Activated CD4-positive, alpha-beta T cell treated with anti-CD3 and anti-CD28 coated beads for 36 hours (primary cell): ENCODE measurements at regions of chr19 and their contacts with region 1.

Region 1: GRCh38 chr19:54463531-54464043 is at the start of gene LENG9:
- DNase-seq: peak; percentile 100
- ATAC-seq: peak; percentile 69
- H3K4me3 Mint-ChIP-seq: peak within 1 kb of the TSS; percentile 80
- H3K27ac Mint-ChIP-seq: peak within 1 kb of the TSS; percentile 91
- H3K4me1 Mint-ChIP-seq: peaks cover 26% of the 10 kb centered on the region
- H3K27me3 Mint-ChIP-seq: peaks cover 6% of the 10 kb centered on the region
- total RNA-seq, gene LENG9: 5.0 to 5.1 TPM

Region 2: GRCh38 chr19:53867225-53868090 is 596.1 kb before region 1 on chr19 and contains the start of gene MYADM:
- CTCF ChIA-PET with region 1: no interaction called
- POLR2A ChIA-PET with region 1: no interaction called
- intact Hi-C with region 1: loop called (anchors 1 to 5 kb)
- DNase-seq: peak; percentile 99
- ATAC-seq: peak; percentile 71
- H3K4me3 Mint-ChIP-seq: peak within 1 kb of the TSS; percentile 91
- H3K27ac Mint-ChIP-seq: peak within 1 kb of the TSS; percentile 88
- H3K4me1 Mint-ChIP-seq: peaks cover 32% of the 10 kb centered on the region
- H3K27me3 Mint-ChIP-seq: no peaks in the 10 kb centered on the region
- total RNA-seq, gene MYADM: 46.4 to 54.6 TPM

Region 3: GRCh38 chr19:54159352-54160181 is 304.0 kb before region 1 on chr19 and contains the start of gene LENG1:
- CTCF ChIA-PET with region 1: no interaction called
- POLR2A ChIA-PET with region 1: no interaction called
- intact Hi-C with region 1: loop called in 1 of 2 experiments (anchors 1 kb)
- DNase-seq: peak; percentile 99
- ATAC-seq: peak; percentile 90
- H3K4me3 Mint-ChIP-seq: peak within 1 kb of the TSS; percentile 87
- H3K27ac Mint-ChIP-seq: peak within 1 kb of the TSS; percentile 98
- H3K4me1 Mint-ChIP-seq: peaks cover 56% of the 10 kb centered on the region
- H3K27me3 Mint-ChIP-seq: peaks cover 7% of the 10 kb centered on the region
- total RNA-seq, gene LENG1: 3.5 to 3.6 TPM

Region 4: DNA sequence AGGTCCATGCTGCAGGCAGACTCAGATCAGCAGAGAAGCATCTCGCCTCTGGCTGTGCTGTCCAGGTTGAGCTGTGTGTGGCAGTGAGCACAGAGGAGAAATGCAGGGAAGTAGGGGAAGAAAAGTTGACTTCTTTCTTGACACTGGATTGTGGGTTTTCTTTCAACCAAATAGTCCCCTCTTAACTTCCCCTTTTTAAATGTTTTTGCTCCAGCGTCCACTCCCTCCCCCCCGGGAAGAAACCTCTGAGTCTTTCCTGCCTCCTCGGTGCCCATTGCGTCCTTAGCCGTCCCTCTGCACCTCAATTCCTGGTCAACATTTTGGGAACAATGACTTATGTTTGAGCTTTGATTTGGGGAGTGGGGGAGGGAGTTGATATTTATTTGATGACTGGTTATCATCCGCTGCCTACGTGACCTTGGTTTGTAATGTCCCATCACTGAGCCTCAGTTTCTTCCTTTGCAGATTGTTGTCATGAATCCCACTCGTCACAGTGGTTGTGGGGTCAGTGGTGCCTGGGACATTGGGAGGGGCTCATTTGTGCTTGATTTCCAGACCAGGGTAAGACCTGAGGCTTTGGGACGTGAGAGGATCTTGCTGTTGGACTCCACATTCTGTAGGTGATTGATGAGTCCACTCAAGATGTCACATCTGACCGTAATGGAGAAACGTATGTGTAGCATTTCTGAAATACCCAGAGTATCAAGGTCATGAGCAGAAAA is 182.4 kb before region 1 on chr19 and contains the start of gene LILRB2:
- CTCF ChIA-PET with region 1: no interaction called
- POLR2A ChIA-PET with region 1: no interaction called
- intact Hi-C with region 1: no loop called
- DNase-seq: no peak
- ATAC-seq: no peak
- H3K4me3 Mint-ChIP-seq: no peak within 1 kb of the TSS
- H3K27ac Mint-ChIP-seq: no peak within 1 kb of the TSS
- H3K4me1 Mint-ChIP-seq: no peaks in the 10 kb centered on the region
- H3K27me3 Mint-ChIP-seq: peaks cover 39% of the 10 kb centered on the region
- total RNA-seq, gene LILRB2: not detected

Region 5: GRCh38 chr19:54399189-54399588 is 64.4 kb before region 1 on chr19:
- CTCF ChIA-PET with region 1: no interaction called
- POLR2A ChIA-PET with region 1: no interaction called
- intact Hi-C with region 1: no loop called
- DNase-seq: no peak
- ATAC-seq: no peak
- H3K4me3 Mint-ChIP-seq: no peak overlapping the region
- H3K27ac Mint-ChIP-seq: no peak overlapping the region
- H3K4me1 Mint-ChIP-seq: no peaks in the 10 kb centered on the region
- H3K27me3 Mint-ChIP-seq: peaks cover 4% of the 10 kb centered on the region

Region 6: DNA sequence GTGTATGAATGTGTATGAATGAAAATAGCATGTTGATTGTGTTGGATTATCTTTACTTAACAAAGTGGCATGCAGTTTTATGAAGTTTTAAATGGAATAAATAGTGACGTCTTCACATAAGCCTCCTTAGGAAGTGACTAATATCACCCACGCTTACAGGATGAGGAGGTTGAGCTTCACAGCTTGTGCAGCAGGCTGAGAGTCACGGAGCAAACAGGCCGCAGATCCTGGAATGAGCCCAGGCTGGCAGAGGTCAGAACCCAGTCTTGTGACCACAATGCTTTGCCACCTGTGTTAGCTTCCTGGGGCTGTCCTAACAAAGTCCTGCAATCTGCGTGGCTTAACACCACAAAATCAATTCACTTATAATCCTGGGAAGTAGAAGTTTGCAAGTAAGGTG is 59.8 kb after region 1 on chr19:
- CTCF ChIA-PET with region 1: interaction called, 4 read pairs
- POLR2A ChIA-PET with region 1: interaction called, 3 read pairs
- intact Hi-C with region 1: loop called in 1 of 2 experiments (anchors 2 kb)
- DNase-seq: peak; percentile 84
- ATAC-seq: peak; percentile 82
- H3K4me3 Mint-ChIP-seq: no peak overlapping the region
- H3K27ac Mint-ChIP-seq: peak overlapping the region; percentile 72
- H3K4me1 Mint-ChIP-seq: peaks cover 60% of the 10 kb centered on the region
- H3K27me3 Mint-ChIP-seq: peaks cover 4% of the 10 kb centered on the region

Region 7: GRCh38 chr19:54725321-54725720 is 261.7 kb after region 1 on chr19:
- CTCF ChIA-PET with region 1: no interaction called
- POLR2A ChIA-PET with region 1: no interaction called
- intact Hi-C with region 1: no loop called
- DNase-seq: no peak
- ATAC-seq: no peak
- H3K4me3 Mint-ChIP-seq: no peak overlapping the region
- H3K27ac Mint-ChIP-seq: no peak overlapping the region
- H3K4me1 Mint-ChIP-seq: no peaks in the 10 kb centered on the region
- H3K27me3 Mint-ChIP-seq: peaks cover 13% of the 10 kb centered on the region

Region 8: GRCh38 chr19:55385740-55386529 is 922.3 kb after region 1 on chr19 and contains the start of gene RPL28:
- CTCF ChIA-PET with region 1: no interaction called
- POLR2A ChIA-PET with region 1: no interaction called
- intact Hi-C with region 1: loop called in 1 of 2 experiments (anchors 2 kb)
- DNase-seq: peak; percentile 98
- ATAC-seq: peak; percentile 85
- H3K4me3 Mint-ChIP-seq: peak within 1 kb of the TSS; percentile 89
- H3K27ac Mint-ChIP-seq: peak within 1 kb of the TSS; percentile 98
- H3K4me1 Mint-ChIP-seq: peaks cover 51% of the 10 kb centered on the region
- H3K27me3 Mint-ChIP-seq: no peaks in the 10 kb centered on the region
- total RNA-seq, gene RPL28: 2,751 to 4,078 TPM

Region 9: GRCh38 chr19:55643348-55644176 is 1180.0 kb after region 1 on chr19 and contains the start of gene ZNF581:
- CTCF ChIA-PET with region 1: no interaction called
- POLR2A ChIA-PET with region 1: no interaction called
- intact Hi-C with region 1: loop called in 1 of 2 experiments (anchors 5 kb)
- DNase-seq: peak; percentile 91
- ATAC-seq: peak; percentile 55
- H3K4me3 Mint-ChIP-seq: peak within 1 kb of the TSS; percentile 93
- H3K27ac Mint-ChIP-seq: peak within 1 kb of the TSS; percentile 99
- H3K4me1 Mint-ChIP-seq: peaks cover 44% of the 10 kb centered on the region
- H3K27me3 Mint-ChIP-seq: no peaks in the 10 kb centered on the region
- total RNA-seq, gene ZNF581: 18.9 to 26.9 TPM